Dorsolateral prefrontal cortex (tissue), 120 donors: ENCODE measurements at regions of chr5 and their contacts with region 1.

Region 1: GRCh38 chr5:90109290-90109689 is 300.3 kb downstream of the CETN3 start:
- DNase-seq: no peak
- H3K4me3 ChIP-seq: no peak overlapping the region
- H3K27ac ChIP-seq: no peak overlapping the region
- H3K27me3 ChIP-seq: no peaks in the 10 kb centered on the region
- CTCF ChIP-seq: no peak

Region 2: GRCh38 chr5:89081360-89081759 is 1027.9 kb before region 1 on chr5:
- intact Hi-C with region 1: loop called in 1 of 2 experiments (anchors 10 kb)
- DNase-seq: no peak
- H3K4me3 ChIP-seq: no peak overlapping the region
- H3K27ac ChIP-seq: no peak overlapping the region
- H3K27me3 ChIP-seq: no peaks in the 10 kb centered on the region
- CTCF ChIP-seq: no peak

Region 3: GRCh38 chr5:90264689-90265544 is 155.6 kb after region 1 on chr5:
- intact Hi-C with region 1: no loop called
- DNase-seq: peak; percentile 43 to 84 (median 66)
- H3K4me3 ChIP-seq: peak overlapping the region in 29 of 59 donors; percentile 1 to 50 (median 21)
- H3K27ac ChIP-seq: peak overlapping the region in 34 of 59 donors; percentile 0 to 76 (median 23)
- H3K27me3 ChIP-seq: no peaks in the 10 kb centered on the region
- CTCF ChIP-seq: peak; percentile 77 to 98 (median 92)